Ascending aorta (tissue), 2 donors: ENCODE measurements at regions of chr10 and their contacts with region 1.

Region 1: DNA sequence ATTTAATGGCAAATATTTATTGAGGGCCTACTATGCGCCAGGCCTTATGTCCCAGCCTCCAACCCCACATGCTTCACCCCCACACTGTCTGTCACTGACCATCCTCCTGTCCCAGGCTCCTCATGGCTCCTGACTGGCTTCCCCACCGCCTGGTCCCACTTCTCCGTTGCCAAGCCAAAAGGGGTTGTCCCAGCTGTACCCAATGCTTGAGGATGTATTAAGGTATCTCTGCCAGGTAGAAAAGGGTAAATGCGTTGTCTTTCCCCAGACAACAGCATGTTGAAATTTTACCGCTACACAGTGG is 168.8 kb upstream of the FRMD4A start:
- DNase-seq: no peak
- H3K4me3 ChIP-seq: no peak overlapping the region
- H3K27ac ChIP-seq: no peak overlapping the region
- H3K4me1 ChIP-seq: peaks cover 0 to 3% of the 10 kb centered on the region in 2 donors
- H3K27me3 ChIP-seq: no peaks in the 10 kb centered on the region
- CTCF ChIP-seq: no peak

Region 2: DNA sequence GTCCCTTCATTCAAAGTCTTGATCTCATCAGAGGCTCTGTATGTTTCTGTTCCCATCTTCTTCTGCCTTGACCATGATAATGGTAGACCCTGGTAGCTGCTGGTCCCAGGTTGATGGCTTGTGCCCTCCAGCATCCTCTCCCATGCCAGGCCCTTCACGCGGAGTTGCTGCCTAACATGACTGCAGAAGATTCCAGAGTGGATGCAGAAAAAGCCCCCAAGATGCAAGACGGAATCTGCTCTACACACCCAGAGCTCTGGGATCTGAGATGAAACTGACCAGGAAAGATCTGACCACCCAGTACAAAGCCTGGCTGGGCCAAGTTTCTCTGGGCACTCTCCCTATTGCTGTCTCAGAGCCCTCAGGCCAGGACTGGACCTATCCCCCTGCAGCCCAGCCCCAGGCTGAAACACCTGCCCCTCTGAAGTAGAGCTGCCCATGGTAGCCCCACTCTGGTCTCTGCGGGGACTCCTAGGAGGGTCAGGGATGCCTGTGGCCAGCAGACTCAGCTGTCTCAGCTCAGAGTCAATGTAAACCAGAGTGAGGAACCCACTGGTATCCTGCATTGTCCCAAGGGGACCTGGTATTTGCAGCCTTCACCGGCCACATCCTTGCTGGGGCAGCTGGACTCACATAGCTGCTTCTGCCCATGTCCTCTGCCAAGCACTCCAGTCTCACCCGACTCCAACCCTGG is 159.4 kb before region 1 on chr10:
- intact Hi-C with region 1: no loop called
- DNase-seq: no peak
- H3K4me3 ChIP-seq: no peak overlapping the region
- H3K27ac ChIP-seq: no peak overlapping the region
- H3K4me1 ChIP-seq: no peaks in the 10 kb centered on the region
- H3K27me3 ChIP-seq: no peaks in the 10 kb centered on the region
- CTCF ChIP-seq: no peak

Region 3: GRCh38 chr10:14543046-14543903 is 43.7 kb after region 1 on chr10:
- intact Hi-C with region 1: loop called (anchors 2 kb)
- DNase-seq: peak in 1 of 2 donors; percentile 68
- H3K4me3 ChIP-seq: peak overlapping the region; percentile 35 to 46
- H3K27ac ChIP-seq: peak overlapping the region; percentile 3 to 55
- H3K4me1 ChIP-seq: peaks cover 0 to 3% of the 10 kb centered on the region in 2 donors
- H3K27me3 ChIP-seq: no peaks in the 10 kb centered on the region
- CTCF ChIP-seq: peak; percentile 42 to 65 (median 48)

Region 4: DNA sequence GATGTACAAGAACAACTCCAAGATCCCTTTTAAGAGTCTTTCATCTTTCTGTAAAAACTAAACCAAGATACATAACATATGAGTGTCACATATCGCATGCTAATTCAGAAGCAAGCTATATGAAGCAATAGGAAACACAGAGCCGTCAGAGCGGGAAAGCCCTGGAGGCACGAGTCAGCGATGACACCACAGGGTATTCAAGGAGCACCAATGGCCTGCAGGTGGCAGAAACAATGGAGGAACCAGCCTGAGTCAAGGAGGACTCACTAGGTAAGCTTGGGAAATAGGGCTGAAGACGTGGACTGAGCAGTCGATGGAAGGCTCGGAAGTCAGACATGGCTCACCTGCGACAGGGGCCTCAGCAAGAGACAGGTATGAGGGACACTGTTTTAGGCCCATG is 60.7 kb after region 1 on chr10:
- intact Hi-C with region 1: no loop called
- DNase-seq: no peak
- H3K4me3 ChIP-seq: no peak overlapping the region
- H3K27ac ChIP-seq: no peak overlapping the region
- H3K4me1 ChIP-seq: peaks cover 0 to 13% of the 10 kb centered on the region in 2 donors
- H3K27me3 ChIP-seq: no peaks in the 10 kb centered on the region
- CTCF ChIP-seq: no peak

Region 5: DNA sequence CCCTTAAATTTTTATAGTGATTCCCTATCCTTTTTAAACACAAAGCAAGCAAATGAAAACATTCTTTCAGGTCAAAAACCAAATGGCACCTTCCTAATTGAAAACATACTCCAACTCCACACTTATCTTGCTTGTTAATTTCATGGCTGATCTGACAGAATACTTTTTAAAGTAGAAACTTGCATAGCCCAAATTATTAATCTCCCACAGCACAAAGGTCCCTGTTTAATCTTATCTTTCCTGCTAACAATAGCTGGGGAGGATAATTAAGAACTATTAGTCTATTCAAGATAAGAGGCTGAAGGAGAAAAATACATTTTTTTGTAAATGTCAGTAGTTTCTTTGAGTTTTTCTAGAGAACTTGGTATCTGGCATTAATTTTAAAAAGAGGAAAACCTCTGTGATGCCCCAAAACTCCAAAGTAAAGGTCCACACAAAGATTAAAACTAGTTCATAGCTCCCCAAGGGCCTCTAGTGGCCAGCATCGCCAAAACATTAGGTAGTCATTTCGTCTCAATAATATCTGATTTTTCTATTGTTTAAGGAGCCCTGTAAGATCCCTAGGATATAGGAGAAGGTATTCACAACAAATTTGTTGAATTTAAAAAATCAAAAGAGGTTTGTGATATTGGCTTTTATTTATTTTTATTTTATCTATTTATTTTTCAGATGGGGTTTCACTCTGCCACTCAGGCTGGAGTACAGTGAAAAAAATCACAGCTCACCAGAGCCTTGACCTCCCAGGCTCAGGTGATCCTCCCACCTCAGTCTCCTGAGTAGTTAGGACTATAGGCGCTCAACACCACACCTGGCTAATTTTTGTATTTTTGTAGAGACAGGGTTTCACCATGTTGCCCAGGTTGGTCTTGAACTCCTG is 323.6 kb after region 1 on chr10:
- intact Hi-C with region 1: loop called (anchors 1 kb)
- DNase-seq: no peak
- H3K4me3 ChIP-seq: no peak overlapping the region
- H3K27ac ChIP-seq: no peak overlapping the region
- H3K4me1 ChIP-seq: peaks cover 0 to 3% of the 10 kb centered on the region in 2 donors
- H3K27me3 ChIP-seq: no peaks in the 10 kb centered on the region
- CTCF ChIP-seq: peak; percentile 37 to 55 (median 49)

Region 6: DNA sequence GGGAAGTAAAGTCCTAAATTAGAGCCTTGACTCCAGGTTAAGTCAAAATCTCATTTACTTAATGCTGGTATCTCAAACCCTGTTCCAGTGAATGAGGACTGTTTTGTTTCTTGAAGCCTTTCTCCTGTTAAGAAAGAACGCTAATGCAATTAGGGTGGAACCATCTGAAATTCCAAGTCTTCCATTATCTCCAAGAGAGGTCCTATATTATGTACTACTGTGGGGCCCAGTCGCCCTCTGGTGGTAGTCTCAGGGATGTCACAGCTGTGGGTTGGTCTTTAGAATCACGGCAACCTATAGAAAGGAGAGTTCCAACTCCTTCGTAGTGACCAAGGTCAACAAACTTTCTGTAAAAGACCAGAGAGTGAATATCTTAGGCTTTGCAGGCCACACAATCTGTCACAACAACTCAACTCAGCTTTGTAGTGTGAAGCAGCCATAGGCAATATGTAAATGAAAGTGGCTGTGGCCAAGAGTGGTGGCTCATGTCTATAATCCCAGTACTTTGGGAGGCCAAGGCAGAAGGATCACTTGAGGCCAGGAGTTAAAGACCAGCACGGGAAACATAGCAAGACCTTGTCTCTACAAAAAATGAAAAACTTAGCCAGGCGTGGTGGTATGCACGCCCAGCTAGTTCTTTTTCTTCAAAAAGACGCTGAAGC is 606.9 kb after region 1 on chr10:
- intact Hi-C with region 1: loop called (anchors 2 kb)
- DNase-seq: peak in 1 of 2 donors; percentile 87
- H3K4me3 ChIP-seq: no peak overlapping the region
- H3K27ac ChIP-seq: no peak overlapping the region
- H3K4me1 ChIP-seq: no peaks in the 10 kb centered on the region
- H3K27me3 ChIP-seq: no peaks in the 10 kb centered on the region
- CTCF ChIP-seq: peak; percentile 80 to 89 (median 88)